Heart right ventricle (tissue), 16 donors: ENCODE measurements at regions of chr20 and their contacts with region 1.

Region 1: DNA sequence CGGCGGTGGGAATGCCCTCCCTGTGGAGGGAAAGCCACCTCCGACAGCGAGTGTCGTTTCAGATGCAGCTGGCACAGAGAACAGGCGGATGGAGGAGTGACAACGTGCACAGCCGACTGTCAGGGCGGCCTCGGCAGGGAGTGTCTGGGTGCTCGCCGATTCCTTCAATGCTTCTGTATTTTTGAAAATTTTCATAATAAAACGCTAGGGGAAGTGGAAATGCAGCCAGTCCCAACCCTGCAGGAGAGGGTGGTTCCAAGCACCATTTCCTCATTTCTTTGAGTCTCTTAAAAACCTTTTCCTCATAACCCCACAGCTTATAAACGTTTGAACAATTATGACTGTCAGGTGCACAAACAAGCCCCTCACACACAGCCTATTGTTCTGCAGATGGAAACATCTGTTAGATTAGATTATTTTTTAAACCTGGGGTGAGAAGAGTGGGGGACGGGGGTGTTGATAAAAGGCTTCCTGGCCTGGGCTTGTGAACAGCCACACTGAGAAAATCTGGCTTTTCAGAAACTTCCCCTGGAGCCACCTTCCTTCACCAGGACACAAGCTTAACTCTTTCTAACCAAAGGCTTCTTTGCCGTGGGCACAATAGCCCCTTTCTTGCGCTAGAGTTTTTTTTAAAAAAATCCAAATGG is 228.9 kb downstream of the ANKRD60 start:
- DNase-seq: peak in 1 of 2 donors; percentile 38
- ATAC-seq: peak in 7 of 8 donors; percentile 27 to 75 (median 63)
- H3K4me3 ChIP-seq: peak overlapping the region in 7 of 10 donors; percentile 4 to 21 (median 20)
- H3K27ac ChIP-seq: peak overlapping the region in 8 of 10 donors; percentile 31 to 83 (median 54)
- H3K4me1 ChIP-seq: peaks cover 5 to 68% (median 46%) of the 10 kb centered on the region in 9 donors
- H3K27me3 ChIP-seq: no peaks in the 10 kb centered on the region
- CTCF ChIP-seq: peak in 1 of 9 donors; percentile 9

Region 2: DNA sequence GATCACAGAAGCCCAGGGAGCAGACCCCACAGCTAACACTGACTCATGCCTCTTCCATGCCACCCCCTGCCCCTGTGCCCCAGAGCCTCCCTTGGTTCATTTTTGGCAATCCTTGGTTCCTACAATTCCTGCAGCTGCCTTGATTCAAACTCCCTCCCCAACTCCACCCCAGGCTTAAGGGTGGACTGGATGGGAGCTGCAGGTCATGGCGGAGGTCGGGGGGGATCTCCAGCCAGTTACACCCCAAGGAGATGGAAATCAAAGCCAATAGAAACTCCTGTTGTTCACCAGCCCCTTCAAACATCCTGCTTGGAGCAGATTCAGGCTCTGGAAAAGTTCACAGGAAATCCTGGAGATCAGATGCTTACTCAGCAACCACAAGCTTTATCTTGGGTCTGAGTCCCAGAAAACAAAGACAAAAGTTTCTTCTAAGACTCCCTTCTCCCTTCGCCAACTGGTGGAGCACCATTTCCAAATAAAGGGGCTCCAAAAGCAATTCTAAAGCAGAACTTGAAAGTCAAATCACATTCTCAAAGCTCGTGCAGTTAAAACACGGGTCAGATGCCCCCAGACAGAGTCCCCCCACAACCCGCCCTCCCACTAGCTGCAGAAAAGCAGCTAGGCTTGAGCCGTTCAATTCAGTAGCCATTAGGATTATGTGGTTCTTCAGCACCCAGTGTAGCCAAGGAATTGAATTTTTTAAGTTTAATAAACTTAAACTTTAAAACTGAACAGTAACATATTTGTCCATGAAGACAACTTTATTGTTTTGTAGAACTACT is 79.3 kb after region 1 on chr20:
- intact Hi-C with region 1: loop called in 1 of 10 experiments (anchors 5 kb)
- DNase-seq: peak in 1 of 2 donors; percentile 34
- ATAC-seq: peak in 5 of 8 donors; percentile 44 to 84 (median 81)
- H3K4me3 ChIP-seq: no peak overlapping the region
- H3K27ac ChIP-seq: peak overlapping the region in 6 of 10 donors; percentile 30 to 56 (median 50)
- H3K4me1 ChIP-seq: peaks cover 0 to 41% (median 27%) of the 10 kb centered on the region in 9 donors
- H3K27me3 ChIP-seq: peaks cover 0 to 3% (median 0%) of the 10 kb centered on the region in 7 donors
- CTCF ChIP-seq: no peak